B cell (primary cell): ENCODE measurements at regions of chr22 and their contacts with region 1.

Region 1: GRCh38 chr22:50341977-50342650 is 1.0 kb upstream of the PPP6R2 start:
- DNase-seq: peak; percentile 91
- ATAC-seq: peak; percentile 52
- H3K4me3 ChIP-seq: peak overlapping the region; percentile 33 to 78 (median 74)
- H3K4me3 Mint-ChIP-seq: peak overlapping the region; percentile 90
- H3K27ac ChIP-seq: peak overlapping the region; percentile 51 to 81
- H3K27ac Mint-ChIP-seq: peak overlapping the region; percentile 82
- H3K4me1 ChIP-seq: peaks cover 16 to 21% of the 10 kb centered on the region in 2 donors
- H3K4me1 Mint-ChIP-seq: peaks cover 10% of the 10 kb centered on the region
- H3K27me3 ChIP-seq: no peaks in the 10 kb centered on the region
- H3K27me3 Mint-ChIP-seq: no peaks in the 10 kb centered on the region
- CTCF ChIP-seq: peak; percentile 94

Region 2: DNA sequence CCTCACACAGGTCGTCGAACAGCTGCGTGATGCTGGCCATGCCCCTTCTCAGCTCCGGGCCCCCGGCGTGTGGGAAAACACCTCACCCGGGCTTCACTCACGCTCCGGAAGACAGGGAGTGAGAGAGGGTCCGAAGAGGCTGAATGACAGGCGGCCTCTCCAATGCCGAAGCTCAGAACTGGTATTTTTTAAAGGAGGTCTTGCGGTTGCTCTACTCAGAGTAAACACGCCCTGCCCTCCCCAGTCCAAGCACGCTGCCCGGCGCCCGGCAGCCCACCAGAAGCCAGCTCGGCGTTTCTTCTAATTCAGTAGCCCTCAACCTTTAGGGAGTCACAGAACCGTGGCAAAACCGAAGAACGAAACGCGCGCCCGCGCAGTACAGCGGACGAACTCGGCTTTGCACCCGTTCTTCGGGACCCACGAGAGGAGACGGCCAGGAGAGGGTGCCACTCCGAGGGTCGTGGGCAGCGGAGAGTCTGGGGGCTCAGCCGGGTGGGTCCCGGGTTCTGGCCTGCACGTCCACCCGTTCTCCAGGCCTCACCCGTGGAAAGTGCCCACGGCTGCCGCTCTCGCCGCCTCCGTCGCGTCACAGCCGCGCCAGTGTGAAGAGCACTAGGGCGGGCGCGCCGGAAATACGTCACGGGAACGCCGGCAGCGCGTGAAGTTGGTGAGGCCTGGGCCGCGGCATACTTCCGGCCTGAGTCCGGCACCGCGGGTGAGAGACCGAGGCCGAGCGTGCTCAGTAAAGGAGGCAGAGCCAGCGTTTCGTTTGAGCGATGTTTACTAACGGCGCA is 97.5 kb before region 1 on chr22 and contains the start of gene TUBGCP6:
- CTCF ChIA-PET with region 1: interaction called, 49 read pairs
- POLR2A ChIA-PET with region 1: no interaction called
- intact Hi-C with region 1: loop called (anchors 1 kb)
- DNase-seq: peak; percentile 96
- ATAC-seq: peak; percentile 81
- H3K4me3 ChIP-seq: peak within 1 kb of the TSS; percentile 65 to 99 (median 90)
- H3K4me3 Mint-ChIP-seq: peak within 1 kb of the TSS; percentile 96
- H3K27ac ChIP-seq: peak within 1 kb of the TSS; percentile 91 to 96
- H3K27ac Mint-ChIP-seq: peak within 1 kb of the TSS; percentile 99
- H3K4me1 ChIP-seq: peaks cover 33 to 66% of the 10 kb centered on the region in 2 donors
- H3K4me1 Mint-ChIP-seq: peaks cover 40% of the 10 kb centered on the region
- H3K27me3 ChIP-seq: no peaks in the 10 kb centered on the region
- H3K27me3 Mint-ChIP-seq: no peaks in the 10 kb centered on the region
- CTCF ChIP-seq: no peak
- total RNA-seq, gene TUBGCP6: 137 and 139 TPM in 2 replicates

Region 3: GRCh38 chr22:50276143-50276542 is 66.0 kb before region 1 on chr22:
- CTCF ChIA-PET with region 1: interaction called, 17 read pairs
- POLR2A ChIA-PET with region 1: no interaction called
- intact Hi-C with region 1: loop called (anchors 1 kb)
- DNase-seq: peak; percentile 86
- ATAC-seq: peak; percentile 71
- H3K4me3 ChIP-seq: no peak overlapping the region
- H3K4me3 Mint-ChIP-seq: no peak overlapping the region
- H3K27ac ChIP-seq: no peak overlapping the region
- H3K27ac Mint-ChIP-seq: peak overlapping the region; percentile 26
- H3K4me1 ChIP-seq: peaks cover 6 to 12% of the 10 kb centered on the region in 2 donors
- H3K4me1 Mint-ChIP-seq: peaks cover 4% of the 10 kb centered on the region
- H3K27me3 ChIP-seq: peaks cover 0 to 8% (median 1%) of the 10 kb centered on the region in 4 experiments
- H3K27me3 Mint-ChIP-seq: no peaks in the 10 kb centered on the region
- CTCF ChIP-seq: peak; percentile 64

Region 4: GRCh38 chr22:50326959-50327710 is 15.0 kb before region 1 on chr22 and contains the start of gene DENND6B:
- CTCF ChIA-PET with region 1: interaction called, 73 read pairs
- POLR2A ChIA-PET with region 1: interaction called, 3 read pairs
- intact Hi-C with region 1: loop called (anchors 1 kb)
- DNase-seq: peak; percentile 86
- ATAC-seq: peak; percentile 94
- H3K4me3 ChIP-seq: peak within 1 kb of the TSS in 4 of 5 experiments; percentile 51 to 81 (median 72)
- H3K4me3 Mint-ChIP-seq: peak within 1 kb of the TSS; percentile 90
- H3K27ac ChIP-seq: peak within 1 kb of the TSS; percentile 24 to 76
- H3K27ac Mint-ChIP-seq: peak within 1 kb of the TSS; percentile 90
- H3K4me1 ChIP-seq: peaks cover 8 to 13% of the 10 kb centered on the region in 2 donors
- H3K4me1 Mint-ChIP-seq: peaks cover 21% of the 10 kb centered on the region
- H3K27me3 ChIP-seq: peaks cover 0 to 6% (median 0%) of the 10 kb centered on the region in 4 experiments
- H3K27me3 Mint-ChIP-seq: no peaks in the 10 kb centered on the region
- CTCF ChIP-seq: peak; percentile 67
- total RNA-seq, gene DENND6B: 10.3 and 10.6 TPM in 2 replicates

Region 5: GRCh38 chr22:50423042-50423815 is 81.1 kb after region 1 on chr22:
- CTCF ChIA-PET with region 1: no interaction called
- POLR2A ChIA-PET with region 1: no interaction called
- intact Hi-C with region 1: no loop called
- DNase-seq: peak; percentile 5
- ATAC-seq: no peak
- H3K4me3 ChIP-seq: no peak overlapping the region
- H3K4me3 Mint-ChIP-seq: no peak overlapping the region
- H3K27ac ChIP-seq: no peak overlapping the region
- H3K27ac Mint-ChIP-seq: no peak overlapping the region
- H3K4me1 ChIP-seq: no peaks in the 10 kb centered on the region
- H3K4me1 Mint-ChIP-seq: no peaks in the 10 kb centered on the region
- H3K27me3 ChIP-seq: no peaks in the 10 kb centered on the region
- H3K27me3 Mint-ChIP-seq: no peaks in the 10 kb centered on the region
- CTCF ChIP-seq: no peak

Region 6: GRCh38 chr22:50507991-50508884 is 166.1 kb after region 1 on chr22 and contains the start of gene NCAPH2:
- CTCF ChIA-PET with region 1: interaction called, 3 read pairs
- POLR2A ChIA-PET with region 1: no interaction called
- intact Hi-C with region 1: loop called (anchors 5 kb)
- DNase-seq: peak; percentile 98
- ATAC-seq: peak; percentile 71
- H3K4me3 ChIP-seq: peak within 1 kb of the TSS; percentile 75 to 92 (median 91)
- H3K4me3 Mint-ChIP-seq: peak within 1 kb of the TSS; percentile 95
- H3K27ac ChIP-seq: peak within 1 kb of the TSS; percentile 88 to 92
- H3K27ac Mint-ChIP-seq: peak within 1 kb of the TSS; percentile 98
- H3K4me1 ChIP-seq: peaks cover 19 to 29% of the 10 kb centered on the region in 2 donors
- H3K4me1 Mint-ChIP-seq: peaks cover 28% of the 10 kb centered on the region
- H3K27me3 ChIP-seq: no peaks in the 10 kb centered on the region
- H3K27me3 Mint-ChIP-seq: no peaks in the 10 kb centered on the region
- CTCF ChIP-seq: no peak
- total RNA-seq, gene NCAPH2: 71.5 and 76.9 TPM in 2 replicates